T-cell (primary cell): ENCODE measurements at regions of chr16 and their contacts with region 1.

Region 1: GRCh38 chr16:67641779-67642708 is 2.9 kb upstream of the CARMIL2 start:
- DNase-seq: no peak
- ATAC-seq: no peak
- H3K4me3 ChIP-seq: no peak overlapping the region
- H3K4me3 Mint-ChIP-seq: no peak overlapping the region
- H3K27ac ChIP-seq: no peak overlapping the region
- H3K27ac Mint-ChIP-seq: peak overlapping the region; percentile 11 to 39
- H3K4me1 ChIP-seq: peaks cover 0 to 28% of the 10 kb centered on the region in 2 experiments
- H3K4me1 Mint-ChIP-seq: peaks cover 6 to 17% (median 16%) of the 10 kb centered on the region in 3 donors
- H3K27me3 ChIP-seq: no peaks in the 10 kb centered on the region
- H3K27me3 Mint-ChIP-seq: no peaks in the 10 kb centered on the region

Region 2: GRCh38 chr16:66223176-66223780 is 1418.8 kb before region 1 on chr16:
- CTCF ChIA-PET with region 1: no interaction called
- POLR2A ChIA-PET with region 1: no interaction called
- DNase-seq: no peak
- ATAC-seq: no peak
- H3K4me3 ChIP-seq: no peak overlapping the region
- H3K4me3 Mint-ChIP-seq: no peak overlapping the region
- H3K27ac ChIP-seq: no peak overlapping the region
- H3K27ac Mint-ChIP-seq: no peak overlapping the region
- H3K4me1 ChIP-seq: no peaks in the 10 kb centered on the region
- H3K4me1 Mint-ChIP-seq: no peaks in the 10 kb centered on the region
- H3K27me3 ChIP-seq: peaks cover 0 to 43% of the 10 kb centered on the region in 2 experiments
- H3K27me3 Mint-ChIP-seq: peaks cover 12 to 33% of the 10 kb centered on the region in 2 donors

Region 3: DNA sequence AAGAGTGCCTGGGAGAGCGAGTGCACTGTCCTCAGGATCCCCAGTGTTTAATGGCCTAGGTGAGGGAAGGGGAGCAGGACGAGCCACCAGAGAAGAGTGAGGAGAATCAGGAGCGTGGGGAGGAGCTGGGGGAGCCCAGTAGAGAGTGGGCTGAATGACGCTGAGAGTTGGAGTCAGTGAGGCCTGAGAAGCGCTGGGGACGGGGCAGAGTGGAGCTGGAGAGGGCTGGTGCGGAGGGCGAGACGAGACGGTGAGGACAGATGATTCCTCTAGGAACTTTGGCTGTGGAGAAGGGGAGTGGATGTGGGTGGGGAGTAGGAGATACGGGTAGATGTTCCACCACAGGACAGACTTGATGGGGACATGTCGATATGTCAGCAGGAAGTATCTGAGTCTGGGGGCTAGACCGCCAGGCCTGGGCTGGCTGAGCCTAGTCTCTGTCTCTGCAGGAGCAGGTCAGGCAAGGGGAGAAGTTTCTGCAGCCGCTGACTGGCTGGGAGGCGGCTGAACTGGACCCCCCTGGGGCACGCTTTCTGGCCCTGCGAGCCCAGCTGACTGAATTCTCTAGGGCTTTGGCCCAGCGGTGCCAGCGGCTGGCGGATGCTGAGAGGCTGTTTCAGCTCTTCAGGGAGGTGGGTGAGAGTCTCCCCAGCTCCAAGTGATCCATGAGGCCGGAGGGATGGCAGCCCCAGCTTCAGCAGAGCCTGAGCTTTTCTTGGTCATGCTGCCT is 358.1 kb before region 1 on chr16:
- CTCF ChIA-PET with region 1: interaction called in 1 of 2 experiments, 11 read pairs
- POLR2A ChIA-PET with region 1: no interaction called
- DNase-seq: no peak
- ATAC-seq: no peak
- H3K4me3 ChIP-seq: no peak overlapping the region
- H3K4me3 Mint-ChIP-seq: no peak overlapping the region
- H3K27ac ChIP-seq: no peak overlapping the region
- H3K27ac Mint-ChIP-seq: no peak overlapping the region
- H3K4me1 ChIP-seq: peaks cover 0 to 15% of the 10 kb centered on the region in 2 experiments
- H3K4me1 Mint-ChIP-seq: peaks cover 0 to 5% (median 3%) of the 10 kb centered on the region in 3 donors
- H3K27me3 ChIP-seq: no peaks in the 10 kb centered on the region
- H3K27me3 Mint-ChIP-seq: no peaks in the 10 kb centered on the region

Region 4: DNA sequence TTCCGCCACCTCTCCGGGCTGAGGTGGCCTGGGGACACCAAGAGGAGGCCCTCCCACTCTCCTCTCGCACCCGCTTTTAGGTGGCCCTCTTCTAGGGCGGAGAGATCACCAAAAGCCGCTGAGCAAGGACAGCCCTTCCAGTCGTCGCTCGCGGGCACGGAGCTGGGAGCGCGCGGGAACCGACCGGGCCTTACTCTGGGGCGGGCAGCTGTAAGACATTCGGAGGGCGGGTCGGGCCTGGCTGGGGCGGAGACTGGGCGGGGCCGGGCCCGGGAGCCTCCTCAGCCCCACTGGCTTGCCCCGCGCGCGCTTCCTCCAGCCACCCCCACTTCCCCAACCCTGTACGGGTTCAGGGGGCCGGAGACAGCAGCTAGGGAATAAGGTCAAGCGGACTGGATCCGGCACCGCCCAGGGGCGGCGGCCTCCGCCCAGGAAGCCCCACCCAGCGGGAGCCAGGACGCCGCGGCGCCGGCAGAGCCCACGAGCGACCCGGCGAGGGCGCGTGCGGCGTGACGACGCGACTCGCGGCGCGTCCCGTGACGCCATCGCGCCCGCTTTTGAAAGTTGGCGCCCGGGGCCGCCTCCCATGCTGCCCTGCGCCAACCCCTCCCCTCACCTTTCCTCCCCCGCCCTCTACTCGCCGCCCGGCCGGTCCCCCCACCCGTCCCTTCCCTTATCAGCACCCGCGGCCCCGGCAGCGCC is 80.1 kb before region 1 on chr16:
- CTCF ChIA-PET with region 1: interaction called in 1 of 2 experiments, 10 read pairs
- POLR2A ChIA-PET with region 1: no interaction called
- DNase-seq: peak; percentile 92 to 98 (median 96)
- ATAC-seq: peak; percentile 74 to 81 (median 76)
- H3K4me3 ChIP-seq: peak overlapping the region; percentile 55 to 67
- H3K4me3 Mint-ChIP-seq: peak overlapping the region; percentile 85 to 88 (median 86)
- H3K27ac ChIP-seq: peak overlapping the region; percentile 69
- H3K27ac Mint-ChIP-seq: peak overlapping the region; percentile 92 to 94
- H3K4me1 ChIP-seq: peaks cover 21 to 47% of the 10 kb centered on the region in 2 experiments
- H3K4me1 Mint-ChIP-seq: peaks cover 38 to 60% (median 45%) of the 10 kb centered on the region in 3 donors
- H3K27me3 ChIP-seq: no peaks in the 10 kb centered on the region
- H3K27me3 Mint-ChIP-seq: no peaks in the 10 kb centered on the region

Region 5: DNA sequence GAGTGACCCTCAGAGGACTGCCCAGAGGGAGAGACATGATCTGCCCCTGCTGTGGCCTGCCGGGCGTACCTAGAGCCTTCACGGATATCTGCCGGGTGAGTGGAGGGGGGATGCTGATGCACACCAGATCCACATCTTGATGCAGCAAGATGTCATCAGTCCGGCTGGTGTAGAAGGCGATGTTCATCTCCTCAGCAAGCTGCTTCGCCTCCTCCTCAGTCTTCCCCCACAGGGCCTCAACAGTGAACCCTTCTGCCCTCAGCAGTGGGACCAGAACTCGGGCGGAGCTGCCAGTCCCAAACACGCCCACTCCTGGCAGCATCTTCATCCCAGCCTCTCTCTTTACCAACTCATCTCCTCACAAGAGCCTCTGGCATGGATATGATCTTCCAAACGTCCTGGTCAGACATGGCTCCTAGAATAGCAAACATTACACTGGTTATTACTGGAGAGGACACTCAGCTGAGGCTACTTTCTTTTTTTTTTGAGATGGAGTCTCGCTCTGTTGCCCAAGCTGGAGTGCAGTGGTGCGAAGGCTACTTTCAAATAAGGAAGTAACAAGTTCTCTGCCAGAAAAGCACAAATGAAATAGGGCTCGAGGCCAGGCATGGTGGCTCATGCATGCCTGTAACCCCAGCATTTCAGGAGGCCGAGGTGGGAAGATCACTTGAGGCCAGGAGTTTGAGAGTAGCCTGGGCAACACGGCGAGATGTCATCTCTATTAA is 43.5 kb after region 1 on chr16:
- CTCF ChIA-PET with region 1: no interaction called
- POLR2A ChIA-PET with region 1: no interaction called
- DNase-seq: no peak
- ATAC-seq: no peak
- H3K4me3 ChIP-seq: no peak overlapping the region
- H3K4me3 Mint-ChIP-seq: no peak overlapping the region
- H3K27ac ChIP-seq: peak overlapping the region; percentile 38
- H3K27ac Mint-ChIP-seq: peak overlapping the region; percentile 86 to 90
- H3K4me1 ChIP-seq: peaks cover 3 to 19% of the 10 kb centered on the region in 2 experiments
- H3K4me1 Mint-ChIP-seq: peaks cover 0 to 25% (median 14%) of the 10 kb centered on the region in 3 donors
- H3K27me3 ChIP-seq: no peaks in the 10 kb centered on the region
- H3K27me3 Mint-ChIP-seq: no peaks in the 10 kb centered on the region

Region 6: GRCh38 chr16:68047987-68048386 is 405.9 kb after region 1 on chr16:
- CTCF ChIA-PET with region 1: no interaction called
- POLR2A ChIA-PET with region 1: interaction called in 1 of 2 experiments, 13 read pairs
- DNase-seq: no peak
- ATAC-seq: no peak
- H3K4me3 ChIP-seq: no peak overlapping the region
- H3K4me3 Mint-ChIP-seq: no peak overlapping the region
- H3K27ac ChIP-seq: no peak overlapping the region
- H3K27ac Mint-ChIP-seq: no peak overlapping the region
- H3K4me1 ChIP-seq: no peaks in the 10 kb centered on the region
- H3K4me1 Mint-ChIP-seq: peaks cover 4 to 9% (median 5%) of the 10 kb centered on the region in 3 donors
- H3K27me3 ChIP-seq: no peaks in the 10 kb centered on the region
- H3K27me3 Mint-ChIP-seq: no peaks in the 10 kb centered on the region